ENCODE measurements at regions of chr11 and their contacts with region 1.

Region 1: GRCh38 chr11:66677599-66678375 is at the start of gene RBM4B:
- DNase-seq: peak; percentile 96
- H3K4me3 Mint-ChIP-seq: peak within 1 kb of the TSS; percentile 85
- H3K27ac Mint-ChIP-seq: peak within 1 kb of the TSS; percentile 97
- H3K4me1 Mint-ChIP-seq: peaks cover 36% of the 10 kb centered on the region
- H3K27me3 Mint-ChIP-seq: no peaks in the 10 kb centered on the region
- total RNA-seq, gene RBM4B: 19.6 to 20.1 TPM

Region 2: DNA sequence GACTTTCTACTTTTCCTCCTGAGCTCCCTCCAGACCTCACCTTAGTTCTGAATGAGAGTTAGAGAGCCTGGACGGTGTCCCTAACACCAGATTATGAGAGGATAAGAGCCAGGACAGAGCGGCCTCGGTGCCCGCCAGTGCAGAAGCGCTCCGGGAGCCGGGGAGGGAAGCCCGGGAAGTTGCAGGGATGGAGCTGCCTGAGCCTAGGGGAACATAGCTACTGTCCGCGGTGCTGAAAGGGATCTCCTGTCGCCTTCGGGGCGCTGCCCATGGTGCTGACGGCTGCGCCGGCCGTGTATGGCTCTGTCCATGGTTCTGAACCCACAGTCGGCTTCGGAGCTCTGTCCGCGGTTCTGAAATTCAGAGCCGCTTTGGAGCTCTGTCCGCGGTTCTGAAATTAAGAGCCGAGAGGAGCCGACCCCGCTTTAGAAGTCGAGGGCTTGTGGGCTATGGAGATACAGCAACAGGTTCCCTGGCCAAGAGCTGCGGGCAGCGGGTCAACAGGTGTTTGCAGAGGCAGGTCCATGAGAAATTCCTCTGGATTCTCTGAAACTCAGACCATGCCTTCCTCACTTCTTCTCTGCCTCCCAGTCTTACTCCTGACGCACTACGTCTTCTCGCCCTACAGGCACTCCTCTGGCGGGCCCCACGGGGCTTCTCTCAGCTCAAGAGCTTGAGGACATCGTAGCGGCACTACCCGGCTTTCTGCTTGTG is 256.1 kb before region 1 on chr11:
- CTCF ChIA-PET with region 1: interaction called, 10 read pairs
- POLR2A ChIA-PET with region 1: interaction called, 3 read pairs
- DNase-seq: peak; percentile 90
- H3K4me3 Mint-ChIP-seq: no peak overlapping the region
- H3K27ac Mint-ChIP-seq: no peak overlapping the region
- H3K4me1 Mint-ChIP-seq: peaks cover 17% of the 10 kb centered on the region
- H3K27me3 Mint-ChIP-seq: peaks cover 31% of the 10 kb centered on the region

Region 3: DNA sequence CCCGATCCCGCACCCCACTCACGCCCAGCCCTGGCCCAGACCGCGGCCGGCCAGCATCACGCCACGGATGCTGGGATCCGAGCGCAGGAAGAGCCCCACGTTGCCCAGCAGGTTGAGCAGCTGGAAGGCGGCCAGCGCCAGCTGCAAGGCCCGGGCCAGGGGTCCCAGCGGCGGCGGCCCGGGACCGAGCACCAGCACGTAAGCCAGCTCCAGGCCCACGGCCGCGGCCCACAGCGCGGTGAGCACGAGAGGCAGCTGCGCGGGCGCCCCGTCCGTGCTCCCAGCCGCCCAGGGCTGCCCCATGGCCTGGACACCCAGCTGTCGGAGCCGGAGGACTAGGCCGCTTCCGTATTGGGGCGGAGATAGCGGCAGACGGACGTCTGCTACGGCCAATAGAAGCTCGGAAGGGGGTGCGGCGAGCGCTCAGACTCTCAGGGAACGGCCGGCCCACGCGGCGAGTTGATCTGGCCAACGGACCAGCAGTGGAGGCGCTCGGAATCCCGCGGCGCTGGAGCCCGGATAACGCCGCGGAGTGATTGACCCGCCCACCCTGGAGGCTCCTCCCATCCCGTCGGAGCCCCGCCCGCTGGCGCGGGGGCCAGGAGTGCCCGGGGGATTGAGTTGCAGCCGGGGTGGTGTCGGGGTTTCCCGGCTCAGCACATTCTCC is 132.0 kb before region 1 on chr11 and contains the start of gene ZDHHC24:
- CTCF ChIA-PET with region 1: interaction called, 17 read pairs
- POLR2A ChIA-PET with region 1: interaction called, 18 read pairs
- DNase-seq: peak; percentile 93
- H3K4me3 Mint-ChIP-seq: peak within 1 kb of the TSS; percentile 79
- H3K27ac Mint-ChIP-seq: peak within 1 kb of the TSS; percentile 71
- H3K4me1 Mint-ChIP-seq: peaks cover 40% of the 10 kb centered on the region
- H3K27me3 Mint-ChIP-seq: peaks cover 13% of the 10 kb centered on the region
- total RNA-seq, gene ZDHHC24: 25.9 to 26.0 TPM

Region 4: GRCh38 chr11:66616379-66617154 is 61.2 kb before region 1 on chr11 and contains the start of gene RBM14:
- CTCF ChIA-PET with region 1: interaction called, 20 read pairs
- POLR2A ChIA-PET with region 1: interaction called, 37 read pairs
- DNase-seq: peak; percentile 98
- H3K4me3 Mint-ChIP-seq: peak within 1 kb of the TSS; percentile 97
- H3K27ac Mint-ChIP-seq: peak within 1 kb of the TSS; percentile 98
- H3K4me1 Mint-ChIP-seq: peaks cover 43% of the 10 kb centered on the region
- H3K27me3 Mint-ChIP-seq: no peaks in the 10 kb centered on the region
- total RNA-seq, gene RBM14: 116 to 120 TPM

Region 5: GRCh38 chr11:66815646-66816045 is 137.9 kb after region 1 on chr11:
- CTCF ChIA-PET with region 1: no interaction called
- POLR2A ChIA-PET with region 1: no interaction called
- DNase-seq: no peak
- H3K4me3 Mint-ChIP-seq: no peak overlapping the region
- H3K27ac Mint-ChIP-seq: no peak overlapping the region
- H3K4me1 Mint-ChIP-seq: peaks cover 7% of the 10 kb centered on the region
- H3K27me3 Mint-ChIP-seq: no peaks in the 10 kb centered on the region

Region 6: GRCh38 chr11:66835768-66836405 is 158.1 kb after region 1 on chr11:
- CTCF ChIA-PET with region 1: interaction called, 18 read pairs
- POLR2A ChIA-PET with region 1: interaction called, 36 read pairs
- DNase-seq: no peak
- H3K4me3 Mint-ChIP-seq: no peak overlapping the region
- H3K27ac Mint-ChIP-seq: no peak overlapping the region
- H3K4me1 Mint-ChIP-seq: peaks cover 24% of the 10 kb centered on the region
- H3K27me3 Mint-ChIP-seq: no peaks in the 10 kb centered on the region

Measured in activated CD4-positive, alpha-beta memory T cell treated with anti-CD3 and anti-CD28 coated beads, Interleukin-2, amount 10 ng/mL, durations not matched to agents 7 days and 5 days (primary cell).